CD4-positive, alpha-beta memory T cell (primary cell): ENCODE measurements at regions of chr16 and their contacts with region 1.

Region 1: GRCh38 chr16:30472328-30472942 is at the start of gene ITGAL:
- DNase-seq: peak; percentile 87 to 97 (median 89)
- H3K4me3 ChIP-seq: peak within 1 kb of the TSS; percentile 77 to 96
- H3K4me3 Mint-ChIP-seq: peak within 1 kb of the TSS; percentile 98 to 99 (median 98)
- H3K27ac ChIP-seq: peak within 1 kb of the TSS; percentile 89
- H3K27ac Mint-ChIP-seq: peak within 1 kb of the TSS; percentile 93 to 97 (median 95)
- H3K4me1 ChIP-seq: peaks cover 67% of the 10 kb centered on the region
- H3K4me1 Mint-ChIP-seq: peaks cover 33 to 75% (median 45%) of the 10 kb centered on the region in 4 donors
- H3K27me3 ChIP-seq: no peaks in the 10 kb centered on the region
- H3K27me3 Mint-ChIP-seq: no peaks in the 10 kb centered on the region
- total RNA-seq, gene ITGAL: 648 to 657 TPM

Region 2: GRCh38 chr16:29926005-29926710 is 546.3 kb before region 1 on chr16 and contains the start of gene KCTD13:
- CTCF ChIA-PET with region 1: no interaction called
- POLR2A ChIA-PET with region 1: no interaction called
- intact Hi-C with region 1: no loop called
- DNase-seq: peak; percentile 83 to 97 (median 90)
- H3K4me3 ChIP-seq: peak within 1 kb of the TSS; percentile 89 to 95
- H3K4me3 Mint-ChIP-seq: peak within 1 kb of the TSS; percentile 88 to 96 (median 94)
- H3K27ac ChIP-seq: peak within 1 kb of the TSS; percentile 77
- H3K27ac Mint-ChIP-seq: peak within 1 kb of the TSS; percentile 88 to 98 (median 97)
- H3K4me1 ChIP-seq: peaks cover 32% of the 10 kb centered on the region
- H3K4me1 Mint-ChIP-seq: peaks cover 22 to 53% (median 30%) of the 10 kb centered on the region in 4 donors
- H3K27me3 ChIP-seq: no peaks in the 10 kb centered on the region
- H3K27me3 Mint-ChIP-seq: no peaks in the 10 kb centered on the region
- total RNA-seq, gene KCTD13: 85.7 to 87.3 TPM

Region 3: DNA sequence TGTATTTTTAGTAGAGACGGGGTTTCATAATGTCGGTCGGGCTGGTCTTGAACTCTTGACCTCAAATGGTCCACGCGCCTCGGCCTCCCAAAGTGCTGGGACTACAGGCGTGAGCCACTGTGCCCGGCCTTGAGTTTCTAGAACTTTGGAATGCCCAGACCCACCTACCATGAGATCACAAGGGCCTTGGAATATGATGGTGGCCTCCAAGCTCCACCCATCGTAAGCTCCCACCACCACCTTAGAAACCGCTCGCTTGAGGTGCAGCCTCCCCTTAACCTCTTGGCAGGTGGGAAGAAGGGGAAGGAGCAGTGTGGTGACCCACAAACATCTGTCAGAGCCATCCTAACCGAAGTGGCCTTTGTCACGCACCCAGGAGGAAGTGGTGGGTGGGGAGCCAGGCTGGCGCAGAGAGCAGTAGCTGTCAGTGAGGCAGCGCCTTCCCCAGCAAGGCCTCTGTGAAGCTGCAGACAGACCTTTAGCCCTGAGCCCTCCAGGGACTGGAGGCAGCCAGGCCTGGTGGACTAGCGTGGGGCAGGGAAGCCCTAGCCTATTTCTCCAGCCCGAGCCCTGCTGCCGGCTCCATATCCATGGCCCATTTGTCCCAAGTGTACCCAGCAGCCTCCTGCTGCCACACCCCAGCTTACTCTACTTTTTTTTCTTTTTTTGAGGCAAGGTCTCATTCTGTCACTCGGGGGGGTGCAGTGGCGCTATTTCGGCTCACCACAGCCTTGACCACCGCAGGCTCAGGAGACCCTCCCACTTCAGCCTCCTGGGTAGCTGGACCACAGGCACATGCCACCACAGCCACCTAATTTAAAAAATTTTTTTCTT is 13.7 kb before region 1 on chr16:
- CTCF ChIA-PET with region 1: interaction called, 95 read pairs
- POLR2A ChIA-PET with region 1: interaction called, 1,162 read pairs
- intact Hi-C with region 1: loop called (anchors 1 kb)
- DNase-seq: peak; percentile 72 to 85 (median 76)
- H3K4me3 ChIP-seq: peak overlapping the region in 1 of 2 donors; percentile 19
- H3K4me3 Mint-ChIP-seq: peak overlapping the region; percentile 64 to 81 (median 70)
- H3K27ac ChIP-seq: peak overlapping the region; percentile 48
- H3K27ac Mint-ChIP-seq: peak overlapping the region; percentile 87 to 95 (median 89)
- H3K4me1 ChIP-seq: peaks cover 35% of the 10 kb centered on the region
- H3K4me1 Mint-ChIP-seq: peaks cover 18 to 49% (median 31%) of the 10 kb centered on the region in 4 donors
- H3K27me3 ChIP-seq: no peaks in the 10 kb centered on the region
- H3K27me3 Mint-ChIP-seq: no peaks in the 10 kb centered on the region

Region 4: GRCh38 chr16:30509081-30509765 is 36.8 kb after region 1 on chr16:
- CTCF ChIA-PET with region 1: interaction called, 3 read pairs
- POLR2A ChIA-PET with region 1: interaction called, 22 read pairs
- intact Hi-C with region 1: no loop called
- DNase-seq: no peak
- H3K4me3 ChIP-seq: no peak overlapping the region
- H3K4me3 Mint-ChIP-seq: no peak overlapping the region
- H3K27ac ChIP-seq: no peak overlapping the region
- H3K27ac Mint-ChIP-seq: peak overlapping the region in 5 of 7 donors; percentile 18 to 85 (median 48)
- H3K4me1 ChIP-seq: no peaks in the 10 kb centered on the region
- H3K4me1 Mint-ChIP-seq: peaks cover 0 to 12% (median 5%) of the 10 kb centered on the region in 4 donors
- H3K27me3 ChIP-seq: no peaks in the 10 kb centered on the region
- H3K27me3 Mint-ChIP-seq: no peaks in the 10 kb centered on the region

Region 5: GRCh38 chr16:30526823-30527635 is 54.6 kb after region 1 on chr16:
- CTCF ChIA-PET with region 1: no interaction called
- POLR2A ChIA-PET with region 1: interaction called, 13 read pairs
- intact Hi-C with region 1: loop called (anchors 10 kb)
- DNase-seq: peak; percentile 81 to 92 (median 82)
- H3K4me3 ChIP-seq: peak overlapping the region in 1 of 2 donors; percentile 75
- H3K4me3 Mint-ChIP-seq: peak overlapping the region; percentile 81 to 88 (median 85)
- H3K27ac ChIP-seq: peak overlapping the region; percentile 72
- H3K27ac Mint-ChIP-seq: peak overlapping the region; percentile 86 to 95 (median 89)
- H3K4me1 ChIP-seq: peaks cover 43% of the 10 kb centered on the region
- H3K4me1 Mint-ChIP-seq: peaks cover 24 to 46% (median 34%) of the 10 kb centered on the region in 4 donors
- H3K27me3 ChIP-seq: no peaks in the 10 kb centered on the region
- H3K27me3 Mint-ChIP-seq: no peaks in the 10 kb centered on the region